Mammary epithelial cell (primary cell): ENCODE measurements at regions of chr5 and their contacts with region 1.

Region 1: DNA sequence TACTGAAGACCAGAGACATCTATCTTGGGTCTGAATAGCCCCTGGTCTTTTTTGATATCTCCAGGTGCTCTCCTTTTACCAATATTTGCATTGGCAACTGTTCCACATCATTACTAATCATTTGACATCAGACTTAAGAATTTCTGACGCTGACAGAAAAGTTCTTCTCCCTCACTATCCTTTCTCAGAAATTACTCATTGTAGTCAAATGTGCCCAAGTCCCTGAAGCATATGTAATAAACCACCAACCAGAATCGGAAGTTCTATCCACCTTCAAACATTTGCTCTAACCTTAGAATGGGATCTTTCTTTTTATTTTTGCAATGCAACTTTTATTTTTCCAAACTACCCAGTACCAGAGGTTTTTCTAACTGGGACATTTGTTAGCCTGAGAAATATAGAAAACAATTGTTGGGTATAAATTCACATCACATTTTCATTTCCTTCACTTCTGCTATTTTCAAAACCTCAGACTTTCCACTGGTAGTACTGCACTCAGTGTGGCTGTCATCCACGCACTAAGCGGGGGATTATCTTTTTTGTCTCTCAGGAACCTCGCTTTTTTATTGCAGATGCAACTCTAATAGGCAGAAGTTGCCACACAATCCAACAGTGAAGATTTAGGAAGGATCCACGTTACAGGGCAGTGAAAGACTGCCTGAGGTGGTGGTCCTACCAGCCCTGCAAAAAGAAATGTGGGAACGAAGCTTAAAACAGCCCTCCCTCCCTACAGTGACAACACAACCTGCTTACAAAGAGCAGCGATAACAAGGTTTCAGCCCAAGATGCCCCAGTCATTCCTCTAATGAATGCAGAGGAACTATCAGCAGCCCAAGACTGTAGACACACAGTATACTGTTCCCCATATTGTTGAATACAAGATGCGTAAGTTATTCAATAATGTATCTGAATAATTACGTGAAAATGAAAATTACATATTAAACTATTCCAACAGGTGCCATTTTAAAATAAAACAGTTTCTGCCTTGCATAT is 201.2 kb downstream of the EBF1 start:
- DNase-seq: no peak
- H3K4me3 ChIP-seq: no peak overlapping the region
- H3K27ac ChIP-seq: no peak overlapping the region
- H3K4me1 ChIP-seq: no peaks in the 10 kb centered on the region
- H3K27me3 ChIP-seq: no peaks in the 10 kb centered on the region
- CTCF ChIP-seq: no peak

Region 2: GRCh38 chr5:158841481-158842276 is 56.8 kb before region 1 on chr5:
- CTCF ChIA-PET with region 1: no interaction called
- dilution Hi-C with region 1: loop called (anchors 5 kb)
- in situ Hi-C with region 1: no loop called
- intact Hi-C with region 1: no loop called
- DNase-seq: no peak
- H3K4me3 ChIP-seq: no peak overlapping the region
- H3K27ac ChIP-seq: no peak overlapping the region
- H3K4me1 ChIP-seq: no peaks in the 10 kb centered on the region
- H3K27me3 ChIP-seq: peaks cover 3% of the 10 kb centered on the region
- CTCF ChIP-seq: no peak

Region 3: GRCh38 chr5:158910782-158911692 is 12.6 kb after region 1 on chr5:
- CTCF ChIA-PET with region 1: no interaction called
- dilution Hi-C with region 1: no loop called
- in situ Hi-C with region 1: no loop called
- intact Hi-C with region 1: no loop called
- DNase-seq: peak; percentile 3
- H3K4me3 ChIP-seq: no peak overlapping the region
- H3K27ac ChIP-seq: no peak overlapping the region
- H3K4me1 ChIP-seq: no peaks in the 10 kb centered on the region
- H3K27me3 ChIP-seq: peaks cover 2% of the 10 kb centered on the region
- CTCF ChIP-seq: no peak